ENCODE measurements at regions of chr12 and their contacts with region 1.

Region 1: DNA sequence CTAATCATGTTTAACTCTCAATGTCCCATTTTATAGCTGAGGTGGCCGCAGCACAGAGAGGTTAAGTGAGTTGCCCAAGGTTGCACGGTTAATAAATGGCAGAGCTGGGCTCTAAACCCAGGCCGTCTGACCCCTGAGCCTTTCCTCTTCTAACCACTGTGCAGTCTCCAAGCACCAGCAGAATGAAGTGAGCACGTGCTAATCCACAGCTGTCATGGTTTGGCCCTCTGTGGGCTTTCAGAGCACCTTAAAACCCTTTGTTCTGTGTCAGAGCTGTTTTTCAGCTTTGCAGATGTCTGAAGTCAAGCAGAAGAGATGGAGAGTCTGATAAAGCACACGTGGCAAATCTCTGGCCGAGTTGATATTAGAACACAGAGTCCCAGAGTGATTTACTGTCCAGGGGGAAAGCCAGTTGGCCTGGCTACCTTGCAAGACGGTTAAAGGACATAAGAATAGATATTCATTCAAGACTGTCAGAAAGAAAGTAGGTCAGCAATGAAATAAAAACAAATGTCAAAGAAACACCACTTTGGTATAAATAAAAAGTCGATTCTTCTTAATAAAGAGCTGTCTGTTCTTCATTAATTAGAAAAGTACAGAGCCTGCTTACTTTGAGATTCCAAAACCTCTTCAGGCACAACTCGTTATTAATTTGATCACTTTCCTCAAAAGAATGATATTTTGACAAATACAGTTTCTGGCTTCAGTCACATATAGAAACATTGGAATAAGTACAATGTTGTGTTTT is 107.3 kb downstream of the CRADD start:
- DNase-seq: peak; percentile 48
- H3K4me3 ChIP-seq: no peak overlapping the region
- H3K27ac ChIP-seq: peak overlapping the region; percentile 68 to 85 (median 78)
- H3K4me1 ChIP-seq: peaks cover 3 to 37% (median 24%) of the 10 kb centered on the region in 4 donors
- H3K27me3 ChIP-seq: no peaks in the 10 kb centered on the region
- CTCF ChIP-seq: no peak
- EP300 ChIP-seq: peak; percentile 90
- POLR2A ChIP-seq: no peak

Region 2: DNA sequence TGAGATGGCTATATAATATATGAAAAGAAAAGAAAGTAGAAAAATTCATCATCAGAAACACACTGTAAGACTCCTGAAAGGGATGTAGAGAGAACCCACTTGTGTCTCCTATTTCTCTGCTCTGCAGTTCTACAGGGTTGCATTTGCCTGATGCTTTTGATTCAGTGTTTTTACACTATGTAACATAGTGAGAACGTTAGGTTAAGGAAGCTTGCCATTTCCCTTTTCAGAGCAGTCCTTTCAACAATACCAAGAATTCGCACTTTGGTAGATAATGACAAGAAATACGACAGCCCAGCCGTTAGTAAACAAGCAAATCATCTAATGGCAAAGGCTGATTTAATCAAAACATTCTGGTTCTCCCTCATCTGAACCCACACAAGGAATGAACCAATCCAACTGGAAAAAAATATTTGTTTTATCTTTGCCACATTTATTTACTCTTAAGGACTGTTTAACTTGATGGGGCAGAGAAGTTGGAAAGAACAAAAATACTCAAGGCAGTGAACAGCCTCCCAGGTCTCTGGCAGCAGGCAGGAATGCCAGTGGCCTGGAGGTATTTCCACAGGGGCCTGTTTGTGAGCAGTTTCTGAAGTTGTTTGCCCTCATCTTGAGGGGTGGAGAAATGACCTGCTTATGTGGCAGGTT is 242.8 kb before region 1 on chr12:
- in situ Hi-C with region 1: no loop called
- intact Hi-C with region 1: no loop called
- DNase-seq: no peak
- H3K4me3 ChIP-seq: no peak overlapping the region
- H3K27ac ChIP-seq: no peak overlapping the region
- H3K4me1 ChIP-seq: no peaks in the 10 kb centered on the region
- H3K27me3 ChIP-seq: no peaks in the 10 kb centered on the region
- CTCF ChIP-seq: no peak
- EP300 ChIP-seq: no peak
- POLR2A ChIP-seq: no peak

Region 3: GRCh38 chr12:93751864-93752610 is 32.5 kb before region 1 on chr12:
- in situ Hi-C with region 1: no loop called
- intact Hi-C with region 1: no loop called
- DNase-seq: no peak
- H3K4me3 ChIP-seq: no peak overlapping the region
- H3K27ac ChIP-seq: no peak overlapping the region
- H3K4me1 ChIP-seq: peaks cover 0 to 11% (median 0%) of the 10 kb centered on the region in 4 donors
- H3K27me3 ChIP-seq: no peaks in the 10 kb centered on the region
- CTCF ChIP-seq: no peak
- EP300 ChIP-seq: no peak
- POLR2A ChIP-seq: no peak

Region 4: GRCh38 chr12:93813972-93814821 is 29.7 kb after region 1 on chr12:
- in situ Hi-C with region 1: no loop called
- intact Hi-C with region 1: loop called (anchors 5 kb)
- DNase-seq: peak; percentile 59
- H3K4me3 ChIP-seq: no peak overlapping the region
- H3K27ac ChIP-seq: peak overlapping the region; percentile 76 to 86 (median 80)
- H3K4me1 ChIP-seq: peaks cover 9 to 31% (median 15%) of the 10 kb centered on the region in 4 donors
- H3K27me3 ChIP-seq: no peaks in the 10 kb centered on the region
- CTCF ChIP-seq: peak in 1 of 5 experiments; percentile 9
- EP300 ChIP-seq: peak; percentile 87
- POLR2A ChIP-seq: no peak

Measured in transverse colon (tissue), 4 donors.